ACHN (cell line): ENCODE measurements at regions of chr10 and their contacts with region 1.

Region 1: GRCh38 chr10:122435212-122435827 is 19.1 kb upstream of the ARMS2 start:
- DNase-seq: peak; percentile 62

Region 2: DNA sequence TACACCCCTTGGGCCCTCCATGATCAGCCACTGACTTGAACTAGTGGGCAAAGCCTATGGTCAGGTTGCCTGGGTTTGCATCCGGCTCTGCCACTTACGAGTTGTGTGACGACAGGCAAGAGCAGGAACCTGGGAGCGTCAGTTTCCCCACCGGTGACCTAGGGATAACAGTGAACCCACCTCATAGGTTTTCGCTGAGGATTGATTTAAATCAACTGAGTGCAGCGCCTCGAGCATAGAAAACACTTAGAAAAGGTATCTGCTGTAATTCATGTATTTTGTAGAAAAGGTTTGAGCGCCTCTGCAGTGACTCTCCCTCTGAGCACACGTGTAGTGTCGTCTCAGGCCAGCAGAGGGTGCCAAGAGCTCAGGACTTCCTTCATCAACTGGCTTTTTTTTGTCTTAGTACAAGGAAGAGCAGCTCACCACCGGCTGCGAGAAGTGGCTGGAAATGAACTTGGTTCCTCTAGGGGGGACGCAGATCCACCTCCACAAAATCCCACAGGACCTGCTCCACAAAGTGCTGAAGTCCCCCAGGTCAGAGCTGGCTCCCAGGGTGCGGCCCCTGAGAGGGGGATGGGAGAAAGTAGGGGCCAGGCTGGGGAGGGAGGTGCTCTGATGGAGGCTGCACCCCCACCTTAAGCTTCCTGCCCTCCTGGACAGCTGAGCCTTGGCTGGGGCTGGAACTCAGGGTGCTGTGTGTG is 136.6 kb before region 1 on chr10:
- in situ Hi-C with region 1: loop called (anchors 25 kb)
- DNase-seq: peak; percentile 83

Region 3: DNA sequence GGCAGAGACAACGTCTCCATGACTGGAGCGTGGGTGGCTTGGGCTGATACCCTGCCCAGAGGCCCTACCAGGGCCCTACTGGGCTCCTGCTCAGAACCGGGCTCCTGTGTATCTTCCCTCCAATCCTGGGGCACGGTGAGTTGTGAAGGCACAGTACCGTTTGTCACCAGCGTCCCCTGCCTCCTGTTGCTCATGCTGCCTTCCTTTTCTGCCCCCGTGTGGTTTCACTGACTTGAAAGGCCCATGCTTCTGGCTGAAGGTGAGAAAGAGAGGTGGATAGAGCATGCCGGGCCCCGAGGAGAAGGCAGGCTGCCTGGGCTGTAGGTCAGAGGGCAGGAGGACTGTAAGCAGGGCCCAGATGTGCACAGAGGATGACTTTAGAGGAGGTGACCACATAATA is 116.1 kb after region 1 on chr10:
- in situ Hi-C with region 1: no loop called
- DNase-seq: no peak